Ascending aorta (tissue), 2 donors: ENCODE measurements at regions of chr1 and their contacts with region 1.

Region 1: DNA sequence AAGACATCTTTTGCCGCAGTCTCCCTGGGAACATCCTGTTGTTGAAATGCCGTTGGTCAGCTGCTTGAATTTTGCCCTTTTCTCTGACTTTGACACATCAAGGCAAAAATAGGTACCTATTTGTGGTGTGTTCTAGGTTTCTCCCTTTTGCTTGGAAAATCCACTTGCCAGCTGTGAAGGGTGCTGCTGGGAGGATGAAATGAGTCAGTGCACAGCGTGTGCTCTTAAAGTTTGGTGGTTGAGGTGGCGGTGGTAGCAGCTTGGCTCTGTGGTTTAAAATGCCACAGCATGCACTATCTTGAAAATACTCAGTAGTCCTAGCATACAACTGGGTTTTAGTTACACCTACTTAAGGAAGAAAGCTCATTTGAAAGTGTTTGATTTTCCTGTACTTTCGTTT is 183.8 kb downstream of the DHRS3 start:
- DNase-seq: peak in 1 of 2 donors; percentile 83
- H3K4me3 ChIP-seq: no peak overlapping the region
- H3K27ac ChIP-seq: peak overlapping the region; percentile 90 to 97
- H3K4me1 ChIP-seq: peaks cover 26 to 62% of the 10 kb centered on the region in 2 donors
- H3K27me3 ChIP-seq: no peaks in the 10 kb centered on the region
- CTCF ChIP-seq: no peak

Region 2: GRCh38 chr1:12448746-12449177 is 14.6 kb after region 1 on chr1:
- intact Hi-C with region 1: loop called (anchors 1 kb)
- DNase-seq: no peak
- H3K4me3 ChIP-seq: no peak overlapping the region
- H3K27ac ChIP-seq: peak overlapping the region; percentile 69 to 89
- H3K4me1 ChIP-seq: peaks cover 43 to 73% of the 10 kb centered on the region in 2 donors
- H3K27me3 ChIP-seq: no peaks in the 10 kb centered on the region
- CTCF ChIP-seq: no peak

Region 3: DNA sequence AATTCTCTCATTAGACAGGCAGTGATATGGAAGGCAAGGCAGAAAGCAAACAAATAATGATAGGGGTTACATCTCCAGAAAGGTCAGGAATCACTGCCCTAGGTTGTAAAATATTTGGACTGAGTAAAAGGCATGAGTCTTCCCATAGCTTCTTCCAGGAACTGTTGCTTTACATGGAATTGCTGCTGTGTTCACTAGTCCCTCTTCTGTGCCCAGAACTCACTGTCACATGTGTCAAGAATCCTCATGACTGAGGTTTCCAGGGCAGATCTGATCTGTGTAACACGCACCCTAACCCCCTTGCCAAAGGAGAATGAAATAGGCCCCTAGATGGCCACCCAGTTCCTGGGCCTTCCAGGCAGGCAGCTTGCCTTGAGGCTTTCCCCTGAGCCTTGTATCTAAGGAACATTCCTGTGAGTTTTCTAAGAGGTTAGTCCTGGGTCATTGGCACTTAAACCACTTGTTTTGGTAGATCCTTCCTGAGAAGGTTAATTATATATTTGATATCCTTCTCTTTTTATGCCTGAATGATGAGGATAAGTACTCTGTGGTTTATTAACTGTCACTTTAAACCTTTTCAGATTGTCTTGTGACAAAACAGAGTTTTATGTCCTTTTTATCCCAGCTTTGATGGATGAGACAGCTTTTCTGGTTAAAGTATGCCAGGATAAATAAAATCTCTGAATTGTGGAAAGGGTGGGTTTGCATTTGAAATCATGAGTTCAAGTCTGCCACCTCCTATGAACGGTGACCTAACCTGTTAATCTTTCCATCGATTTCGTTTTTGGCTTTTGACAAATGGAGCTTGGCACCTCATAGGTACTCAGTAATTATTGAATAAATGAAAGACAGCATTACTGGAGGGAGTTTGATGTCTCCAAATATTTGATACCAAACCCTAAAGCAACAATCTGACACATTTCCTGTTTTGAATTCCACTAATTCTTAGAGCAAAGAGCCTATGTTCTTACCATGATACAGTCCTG is 20.5 kb after region 1 on chr1:
- intact Hi-C with region 1: loop called (anchors 2 kb)
- DNase-seq: peak in 1 of 2 donors; percentile 86
- H3K4me3 ChIP-seq: no peak overlapping the region
- H3K27ac ChIP-seq: peak overlapping the region; percentile 89 to 92
- H3K4me1 ChIP-seq: peaks cover 49 to 87% of the 10 kb centered on the region in 2 donors
- H3K27me3 ChIP-seq: no peaks in the 10 kb centered on the region
- CTCF ChIP-seq: no peak

Region 4: DNA sequence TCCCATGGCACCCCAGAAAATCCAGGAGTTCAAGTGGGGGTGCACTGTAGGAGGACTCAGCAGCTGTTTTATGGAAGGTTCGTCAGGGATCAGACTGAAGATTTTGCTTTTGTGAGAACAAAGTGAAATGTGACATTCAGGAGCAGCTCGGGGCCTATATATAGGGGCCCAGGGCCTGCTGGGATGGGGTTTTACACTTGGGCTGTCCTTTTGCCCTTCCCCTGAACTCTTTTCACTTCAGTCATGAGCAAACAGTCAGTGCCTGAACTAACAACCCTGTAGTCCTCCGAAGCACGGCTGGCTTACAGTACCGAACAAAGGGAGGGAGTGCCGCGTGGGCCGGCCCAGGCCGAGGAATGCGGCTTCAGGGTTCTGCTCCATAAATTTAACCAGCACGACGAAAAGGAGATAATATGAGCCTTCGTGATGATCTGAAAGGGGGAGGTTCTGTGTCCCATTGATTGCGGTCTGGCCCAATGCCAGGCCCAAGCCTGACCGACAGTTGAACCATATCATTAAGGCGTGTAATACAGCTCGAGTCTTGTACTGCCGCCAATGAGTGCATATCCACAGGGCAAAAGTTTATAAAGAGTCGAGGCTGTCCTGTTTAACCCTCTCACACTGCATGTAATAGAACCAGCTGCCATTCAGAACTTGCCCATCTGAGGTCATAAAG is 43.9 kb after region 1 on chr1:
- intact Hi-C with region 1: loop called (anchors 5 kb)
- DNase-seq: peak; percentile 42 to 83
- H3K4me3 ChIP-seq: no peak overlapping the region
- H3K27ac ChIP-seq: peak overlapping the region; percentile 74 to 88
- H3K4me1 ChIP-seq: peaks cover 39 to 69% of the 10 kb centered on the region in 2 donors
- H3K27me3 ChIP-seq: no peaks in the 10 kb centered on the region
- CTCF ChIP-seq: no peak

Region 5: DNA sequence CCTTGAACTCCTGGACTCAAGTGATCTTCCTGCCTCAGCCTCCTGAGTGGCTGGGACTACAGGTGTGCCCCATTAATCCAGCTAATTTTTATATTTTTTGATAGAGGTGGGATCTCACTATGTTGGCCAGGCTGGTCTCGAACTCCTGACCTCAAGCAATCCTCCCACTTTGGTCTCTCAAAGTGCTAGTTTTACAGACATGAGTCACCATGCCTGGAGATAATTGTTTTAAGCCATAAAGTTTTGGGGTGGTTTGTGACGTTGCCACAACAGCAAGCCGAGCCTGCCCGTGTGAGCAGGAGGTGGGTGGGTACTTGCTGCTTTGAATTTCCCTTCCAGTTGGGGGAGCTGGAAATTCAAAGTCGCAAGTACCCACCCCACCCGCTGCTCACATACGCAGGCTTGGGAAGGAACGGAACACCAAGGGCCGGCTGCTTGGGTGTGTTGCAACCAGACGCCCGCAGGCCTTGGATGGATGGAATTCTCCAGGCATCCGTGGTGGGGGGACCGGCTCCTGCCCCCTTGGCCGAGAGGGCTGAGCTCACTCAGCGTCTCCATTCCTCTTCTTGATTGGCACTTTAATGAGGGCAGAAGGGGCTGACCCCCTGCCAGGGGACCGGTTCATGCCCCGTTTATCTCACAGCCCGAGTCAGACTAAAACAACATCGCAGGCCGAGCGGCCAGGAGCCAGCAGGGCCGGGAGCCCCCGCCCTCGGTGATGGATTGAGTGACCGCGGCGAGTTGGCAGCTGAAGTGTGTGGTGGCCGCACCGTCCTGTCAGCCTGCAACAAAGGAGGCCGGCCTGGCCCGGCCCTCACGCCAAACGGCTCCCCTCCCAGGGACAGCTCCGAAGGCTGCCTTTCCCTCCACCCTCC is 105.8 kb after region 1 on chr1:
- intact Hi-C with region 1: loop called (anchors 5 kb)
- DNase-seq: peak; percentile 77 to 95
- H3K4me3 ChIP-seq: no peak overlapping the region
- H3K27ac ChIP-seq: peak overlapping the region; percentile 74 to 84
- H3K4me1 ChIP-seq: peaks cover 10 to 19% of the 10 kb centered on the region in 2 donors
- H3K27me3 ChIP-seq: no peaks in the 10 kb centered on the region
- CTCF ChIP-seq: peak in 1 of 3 experiments; percentile 21

Region 6: DNA sequence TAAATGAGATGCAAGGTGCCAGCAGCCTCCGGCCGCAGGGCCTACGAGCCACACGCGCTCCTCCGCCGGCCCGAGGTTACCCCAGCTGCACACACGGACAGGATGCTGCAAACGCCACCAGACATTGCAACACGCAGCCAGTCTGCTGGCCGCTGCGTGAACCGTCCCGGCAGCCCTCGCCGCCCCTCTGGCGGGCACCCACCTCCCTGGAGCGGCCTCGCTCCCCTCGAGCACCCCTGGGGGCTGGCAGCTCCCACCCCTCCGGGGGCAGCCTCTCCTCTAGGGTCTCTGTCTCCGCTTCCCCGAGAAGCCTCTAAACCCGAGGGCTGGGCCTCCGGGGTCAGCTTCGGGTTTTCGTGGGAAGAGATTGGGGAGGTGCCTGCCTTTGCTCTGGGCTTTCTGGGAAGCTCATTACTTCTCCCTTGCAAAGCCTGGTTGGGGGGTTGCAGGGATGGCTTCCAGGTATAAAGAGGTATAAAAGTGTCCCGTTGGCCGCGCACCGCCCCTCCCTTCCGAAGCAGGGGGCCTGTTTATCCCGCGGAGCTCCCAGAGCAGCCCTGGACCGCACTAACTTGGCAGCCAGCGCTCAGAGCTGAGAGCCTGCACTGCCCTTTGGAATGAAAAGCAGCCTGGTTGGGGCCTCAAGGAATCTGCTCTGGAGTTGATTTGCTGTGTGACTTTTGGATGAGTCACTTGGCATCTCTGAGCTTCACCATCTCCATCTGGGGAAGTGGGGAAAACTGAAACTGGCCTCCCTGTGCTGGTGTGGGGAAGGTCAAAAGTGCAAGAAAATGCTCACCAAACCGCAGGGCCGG is 162.0 kb after region 1 on chr1:
- intact Hi-C with region 1: loop called (anchors 5 kb)
- DNase-seq: peak; percentile 93 to 96
- H3K4me3 ChIP-seq: peak overlapping the region; percentile 52 to 63
- H3K27ac ChIP-seq: peak overlapping the region; percentile 96
- H3K4me1 ChIP-seq: peaks cover 43 to 70% of the 10 kb centered on the region in 2 donors
- H3K27me3 ChIP-seq: no peaks in the 10 kb centered on the region
- CTCF ChIP-seq: no peak